ENCODE measurements at regions of chr16 and their contacts with region 1.

Region 1: DNA sequence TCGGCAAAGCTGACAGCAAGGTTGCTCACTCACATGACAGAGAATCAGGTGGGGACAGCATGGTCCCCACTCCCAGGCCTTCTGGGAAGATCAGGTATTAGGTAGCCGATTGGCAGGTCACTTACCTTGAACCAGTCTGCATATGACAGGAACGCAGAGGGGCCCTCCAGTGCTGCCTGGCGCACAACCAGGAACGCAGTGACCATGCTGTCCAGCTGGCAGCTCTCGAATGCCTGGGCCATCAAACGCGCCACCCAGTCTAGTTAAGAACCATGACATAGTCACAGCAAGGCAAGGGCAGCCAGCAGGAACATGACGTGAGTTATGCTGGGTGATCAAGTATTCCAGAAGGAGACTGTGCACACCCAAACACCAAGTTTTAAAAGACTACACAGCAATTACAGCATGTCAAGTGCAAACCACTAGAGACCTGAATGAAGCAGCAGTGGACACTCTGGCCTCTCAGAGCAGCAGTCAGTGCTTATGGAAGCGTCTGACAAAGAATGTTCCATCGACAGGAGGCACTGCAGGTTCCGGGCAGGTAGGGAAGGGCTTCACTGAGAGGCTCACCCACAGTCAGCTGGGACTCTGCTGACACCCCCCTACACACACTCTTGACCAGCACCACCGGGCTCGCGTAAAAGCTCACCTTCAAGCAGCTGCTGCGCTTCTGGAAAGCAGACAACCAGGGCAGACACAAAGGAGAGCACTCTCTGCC is 25.0 kb downstream of the FANCA start:
- DNase-seq: no peak
- ATAC-seq: no peak
- H3K4me3 ChIP-seq: no peak overlapping the region
- H3K27ac ChIP-seq: no peak overlapping the region
- H3K4me1 ChIP-seq: no peaks in the 10 kb centered on the region
- CTCF ChIP-seq: no peak
- EP300 ChIP-seq: no peak
- POLR2A ChIP-seq: no peak
- RAD21 ChIP-seq: no peak

Region 2: DNA sequence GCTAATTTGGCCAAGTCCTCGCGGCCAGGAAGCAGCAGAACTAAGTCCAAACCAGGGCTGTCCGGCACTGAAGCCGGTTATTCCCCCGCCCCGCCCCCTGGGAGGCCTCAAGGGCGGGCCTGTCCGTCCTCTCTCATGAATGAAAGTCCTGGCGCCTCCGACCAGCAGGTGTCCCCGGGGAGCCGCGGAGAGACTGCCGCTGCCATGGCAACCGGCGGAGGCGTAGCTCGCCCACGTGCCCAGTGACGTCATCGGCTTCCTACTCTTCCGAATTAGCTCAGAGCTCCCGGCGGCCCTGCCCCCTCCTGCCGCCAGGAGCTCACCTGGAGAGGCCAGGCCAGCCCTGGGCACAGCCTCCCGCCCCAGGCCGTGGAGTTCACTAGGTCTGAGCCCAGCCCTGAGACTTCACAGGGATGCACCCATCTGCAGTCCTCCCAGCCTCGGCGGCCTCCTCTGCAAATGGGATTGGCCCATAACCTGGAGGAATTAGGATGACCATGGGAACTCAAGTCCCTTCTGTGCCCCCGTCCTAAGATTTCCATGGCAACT is 91.3 kb before region 1 on chr16:
- CTCF ChIA-PET with region 1: interaction called, 70 read pairs
- POLR2A ChIA-PET with region 1: no interaction called
- DNase-seq: peak; percentile 93 to 99
- ATAC-seq: peak; percentile 49 to 76
- H3K4me3 ChIP-seq: peak overlapping the region; percentile 69
- H3K27ac ChIP-seq: peak overlapping the region; percentile 82 to 92
- H3K4me1 ChIP-seq: peaks cover 12% of the 10 kb centered on the region
- CTCF ChIP-seq: peak; percentile 69
- EP300 ChIP-seq: no peak
- POLR2A ChIP-seq: no peak
- RAD21 ChIP-seq: peak; percentile 63 to 71

Region 3: GRCh38 chr16:89711601-89712273 is 79.7 kb before region 1 on chr16:
- CTCF ChIA-PET with region 1: interaction called, 70 read pairs
- POLR2A ChIA-PET with region 1: no interaction called
- DNase-seq: peak; percentile 81 to 94
- ATAC-seq: peak; percentile 57 to 82
- H3K4me3 ChIP-seq: peak overlapping the region; percentile 87
- H3K27ac ChIP-seq: peak overlapping the region; percentile 86 to 89
- H3K4me1 ChIP-seq: peaks cover 9% of the 10 kb centered on the region; the same call in 2 of the 3 replicates
- CTCF ChIP-seq: no peak
- EP300 ChIP-seq: no peak
- POLR2A ChIP-seq: peak; percentile 81
- RAD21 ChIP-seq: no peak

Region 4: DNA sequence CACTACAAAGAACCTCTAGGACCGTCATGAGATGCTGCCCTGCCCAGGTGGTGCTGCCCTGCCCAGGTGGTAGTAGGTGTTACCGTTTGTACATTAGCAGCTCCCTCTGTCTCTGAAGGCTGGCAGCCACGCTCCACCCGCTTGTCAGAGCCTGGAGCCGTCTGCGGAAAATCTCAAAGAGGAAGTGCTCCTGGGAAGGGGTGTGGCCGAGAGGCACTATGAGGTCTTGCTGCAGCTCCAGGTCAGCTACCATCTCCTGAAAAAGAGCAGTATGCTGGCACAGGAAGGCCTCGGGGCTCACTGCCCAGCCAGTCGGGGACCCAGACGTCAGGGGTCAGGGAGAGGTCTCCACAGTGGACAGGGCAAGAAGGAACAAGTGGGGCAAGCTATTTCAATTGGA is 41.8 kb before region 1 on chr16:
- CTCF ChIA-PET with region 1: interaction called, 10 read pairs
- POLR2A ChIA-PET with region 1: no interaction called
- DNase-seq: no peak
- ATAC-seq: no peak
- H3K4me3 ChIP-seq: no peak overlapping the region
- H3K27ac ChIP-seq: no peak overlapping the region
- H3K4me1 ChIP-seq: no peaks in the 10 kb centered on the region
- CTCF ChIP-seq: no peak
- EP300 ChIP-seq: no peak
- POLR2A ChIP-seq: no peak
- RAD21 ChIP-seq: no peak

Region 5: GRCh38 chr16:89775223-89775622 is 16.2 kb before region 1 on chr16:
- CTCF ChIA-PET with region 1: interaction called, 18 read pairs
- POLR2A ChIA-PET with region 1: no interaction called
- DNase-seq: no peak
- ATAC-seq: no peak
- H3K4me3 ChIP-seq: no peak overlapping the region
- H3K27ac ChIP-seq: no peak overlapping the region
- H3K4me1 ChIP-seq: no peaks in the 10 kb centered on the region
- CTCF ChIP-seq: no peak
- EP300 ChIP-seq: no peak
- POLR2A ChIP-seq: no peak
- RAD21 ChIP-seq: no peak

Region 6: GRCh38 chr16:89805136-89805905 is 13.9 kb after region 1 on chr16:
- CTCF ChIA-PET with region 1: interaction called, 30 read pairs
- POLR2A ChIA-PET with region 1: no interaction called
- DNase-seq: no peak
- ATAC-seq: no peak
- H3K4me3 ChIP-seq: no peak overlapping the region
- H3K27ac ChIP-seq: no peak overlapping the region
- H3K4me1 ChIP-seq: no peaks in the 10 kb centered on the region
- CTCF ChIP-seq: no peak
- EP300 ChIP-seq: no peak
- POLR2A ChIP-seq: no peak
- RAD21 ChIP-seq: no peak

Region 7: GRCh38 chr16:89815639-89816348 is 24.4 kb after region 1 on chr16:
- CTCF ChIA-PET with region 1: interaction called, 11 read pairs
- POLR2A ChIA-PET with region 1: no interaction called
- DNase-seq: peak in 1 of 2 experiments; percentile 38
- ATAC-seq: peak; percentile 12 to 55
- H3K4me3 ChIP-seq: peak overlapping the region; percentile 92
- H3K27ac ChIP-seq: peak overlapping the region; percentile 93 to 98
- H3K4me1 ChIP-seq: peaks cover 4% of the 10 kb centered on the region; the same call in 1 of the 3 replicates
- CTCF ChIP-seq: no peak
- EP300 ChIP-seq: no peak
- POLR2A ChIP-seq: no peak
- RAD21 ChIP-seq: no peak

Region 8: DNA sequence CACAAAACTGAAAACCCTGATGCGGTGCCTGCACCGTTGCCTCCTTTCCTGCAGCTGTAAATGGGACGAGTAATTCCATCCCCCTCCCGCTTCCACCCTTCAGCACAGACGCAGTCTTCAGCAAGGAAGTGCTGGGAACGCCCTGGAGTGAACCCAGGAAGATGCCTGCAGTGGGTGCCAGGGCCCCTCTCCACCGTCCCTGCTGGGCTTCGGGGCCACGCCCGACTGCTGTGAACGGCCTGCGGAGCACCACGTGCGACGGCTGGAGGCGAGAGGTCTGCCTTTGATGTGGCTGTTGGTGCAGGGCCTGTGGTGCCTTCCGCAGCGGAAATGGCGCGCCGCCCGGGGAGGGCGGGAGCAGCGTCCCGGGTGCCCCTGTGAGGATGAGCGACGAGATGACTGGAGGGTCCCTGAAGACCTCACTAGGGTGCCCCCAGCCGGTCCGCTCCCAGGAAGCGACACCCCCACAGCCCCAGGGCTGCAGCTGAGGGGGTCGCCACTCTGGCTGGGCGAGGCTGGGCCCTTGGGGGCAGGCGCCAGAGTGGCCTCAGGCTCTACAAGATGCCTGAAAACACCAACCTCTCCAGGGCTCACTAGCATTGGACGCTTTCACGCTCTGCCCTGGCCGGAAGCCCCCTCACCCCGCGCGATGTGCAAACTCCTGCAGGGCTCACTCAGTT is 126.5 kb after region 1 on chr16:
- CTCF ChIA-PET with region 1: no interaction called
- POLR2A ChIA-PET with region 1: no interaction called
- DNase-seq: peak; percentile 76 to 96
- ATAC-seq: peak; percentile 51 to 70
- H3K4me3 ChIP-seq: peak overlapping the region; percentile 40
- H3K27ac ChIP-seq: peak overlapping the region; percentile 93 to 94
- H3K4me1 ChIP-seq: peaks cover 43% of the 10 kb centered on the region
- CTCF ChIP-seq: no peak
- EP300 ChIP-seq: no peak
- POLR2A ChIP-seq: peak; percentile 45
- RAD21 ChIP-seq: no peak; a peak in 1 of 5 replicates